ENCODE measurements at regions of chr18 and their contacts with region 1.

Region 1: DNA sequence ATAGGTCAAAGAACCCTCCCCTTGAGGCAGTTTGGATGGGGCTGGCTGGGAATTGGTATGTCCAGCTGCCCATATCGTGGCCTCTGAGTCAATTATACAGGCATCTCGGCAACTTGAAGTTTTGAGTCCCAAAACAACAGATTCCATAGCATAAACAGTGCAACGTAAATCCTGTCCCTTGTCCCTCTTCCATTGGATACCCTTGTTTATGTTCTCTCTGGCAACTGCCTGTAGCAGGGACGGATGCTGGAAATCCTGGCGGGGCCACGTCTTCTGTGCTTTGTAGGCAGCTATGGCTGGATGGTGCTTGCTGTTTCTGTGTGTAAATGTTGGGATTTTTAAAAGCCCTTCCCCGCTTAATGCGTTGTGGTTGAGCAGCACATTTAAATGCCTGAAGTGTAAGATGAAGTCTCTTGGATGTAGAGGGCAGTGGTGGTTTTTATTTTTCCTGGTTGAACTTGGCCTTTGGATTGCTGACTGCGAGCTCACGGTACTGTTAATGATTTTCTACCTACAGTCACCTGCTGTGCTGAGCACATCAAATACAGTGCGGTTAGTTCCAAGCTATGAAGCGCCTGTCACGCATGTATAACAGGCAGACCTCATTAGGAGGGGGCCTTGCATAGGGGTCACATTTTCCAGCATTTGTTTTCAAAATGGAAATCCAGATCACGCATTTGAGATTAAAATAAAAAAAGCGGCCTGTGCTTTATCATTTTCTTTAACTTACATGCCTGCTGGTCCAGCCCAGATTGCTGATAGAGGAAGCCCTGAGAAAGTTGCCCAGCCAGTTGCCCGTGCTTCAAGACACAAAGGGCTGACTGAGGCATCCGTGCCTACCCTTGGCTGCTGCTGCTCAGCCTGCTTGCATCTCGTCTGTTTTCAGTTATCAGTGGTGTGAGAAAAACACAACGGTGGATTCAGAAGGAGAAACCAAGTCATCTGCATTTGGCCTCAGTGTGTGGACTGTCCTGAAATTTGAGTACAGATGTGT is 84.7 kb downstream of the NEDD4L start:
- DNase-seq: peak in 3 of 6 donors; percentile 30 to 53 (median 47)
- ATAC-seq: peak; percentile 88 to 98 (median 96)
- H3K4me3 ChIP-seq: no peak overlapping the region
- H3K27ac ChIP-seq: peak overlapping the region in 2 of 4 donors; percentile 53 to 64
- H3K4me1 ChIP-seq: peaks cover 13 to 17% (median 15%) of the 10 kb centered on the region in 3 donors
- H3K27me3 ChIP-seq: no peaks in the 10 kb centered on the region
- CTCF ChIP-seq: no peak

Region 2: GRCh38 chr18:57881818-57882413 is 246.8 kb before region 1 on chr18:
- intact Hi-C with region 1: loop called in 1 of 3 experiments (anchors 10 kb)
- DNase-seq: peak; percentile 47 to 74 (median 60)
- ATAC-seq: peak; percentile 96 to 100 (median 99)
- H3K4me3 ChIP-seq: no peak overlapping the region
- H3K27ac ChIP-seq: no peak overlapping the region
- H3K4me1 ChIP-seq: no peaks in the 10 kb centered on the region
- H3K27me3 ChIP-seq: no peaks in the 10 kb centered on the region
- CTCF ChIP-seq: peak; percentile 83 to 87 (median 84)

Region 3: GRCh38 chr18:57970356-57971080 is 158.2 kb before region 1 on chr18:
- intact Hi-C with region 1: loop called in 1 of 3 experiments (anchors 10 kb)
- DNase-seq: no peak
- ATAC-seq: peak in 1 of 4 donors; percentile 39
- H3K4me3 ChIP-seq: no peak overlapping the region
- H3K27ac ChIP-seq: no peak overlapping the region
- H3K4me1 ChIP-seq: no peaks in the 10 kb centered on the region
- H3K27me3 ChIP-seq: no peaks in the 10 kb centered on the region
- CTCF ChIP-seq: peak in 1 of 4 donors; percentile 18

Region 4: DNA sequence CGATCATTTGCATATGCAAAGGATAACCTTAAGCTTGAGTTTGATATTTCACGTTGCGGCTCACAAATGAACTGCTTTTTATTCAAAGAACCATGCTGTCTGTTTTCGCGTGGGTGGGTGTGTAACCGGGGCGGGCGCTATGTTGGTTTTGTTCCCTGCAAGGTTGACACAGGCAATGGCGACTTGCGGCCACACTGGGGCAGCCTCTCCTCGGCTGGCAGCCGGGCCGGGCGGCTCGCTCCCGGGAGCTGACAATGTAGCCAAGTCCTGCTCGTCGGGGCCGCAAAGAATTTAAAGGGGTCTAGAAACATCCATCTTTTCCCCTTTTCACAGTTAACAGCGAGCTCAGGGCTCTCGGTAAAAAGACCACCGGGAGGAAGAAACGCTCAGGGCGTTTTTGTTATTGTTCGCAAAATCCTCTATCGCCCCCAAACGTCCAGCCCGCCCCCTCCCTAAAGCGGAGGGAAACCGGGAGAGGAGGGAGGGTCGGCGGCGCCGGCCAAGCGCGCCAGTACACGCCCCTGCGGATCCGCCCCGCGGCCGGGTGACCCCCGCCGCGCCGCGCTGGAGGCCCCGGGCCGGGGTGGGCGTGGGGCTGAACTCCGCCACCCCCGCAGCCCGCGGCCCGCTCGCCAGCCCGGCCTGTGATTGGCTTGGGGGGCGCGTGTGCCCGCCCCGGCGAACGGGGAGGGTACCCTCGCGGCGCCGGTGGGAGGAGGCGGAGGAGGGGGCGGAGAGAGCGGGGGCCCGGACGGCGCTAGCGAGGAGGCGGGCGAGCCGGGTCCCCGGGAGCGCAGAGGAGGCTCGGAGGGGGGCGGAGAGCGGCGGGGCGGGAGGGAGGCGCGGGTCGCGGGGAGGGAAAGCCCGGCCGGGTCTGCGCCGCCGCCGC is 84.9 kb before region 1 on chr18 and contains the start of gene NEDD4L:
- intact Hi-C with region 1: loop called in 2 of 3 experiments (anchors 5 to 10 kb)
- DNase-seq: peak; percentile 83 to 94 (median 89)
- ATAC-seq: peak; percentile 69 to 85 (median 77)
- H3K4me3 ChIP-seq: peak within 1 kb of the TSS; percentile 79 to 99 (median 95)
- H3K27ac ChIP-seq: peak within 1 kb of the TSS; percentile 89 to 95 (median 94)
- H3K4me1 ChIP-seq: peaks cover 13 to 16% (median 13%) of the 10 kb centered on the region in 3 donors
- H3K27me3 ChIP-seq: no peaks in the 10 kb centered on the region
- CTCF ChIP-seq: peak; percentile 70 to 85 (median 81)
- total RNA-seq, gene NEDD4L: 57.7 to 113 (median 72.3) TPM

Region 5: GRCh38 chr18:58321986-58322385 is 193.3 kb after region 1 on chr18:
- intact Hi-C with region 1: loop called in 1 of 3 experiments (anchors 10 kb)
- DNase-seq: peak; percentile 54 to 74 (median 62)
- ATAC-seq: peak; percentile 86 to 97 (median 96)
- H3K4me3 ChIP-seq: no peak overlapping the region
- H3K27ac ChIP-seq: peak overlapping the region in 3 of 4 donors; percentile 13 to 63 (median 52)
- H3K4me1 ChIP-seq: peaks cover 6 to 12% (median 7%) of the 10 kb centered on the region in 3 donors
- H3K27me3 ChIP-seq: no peaks in the 10 kb centered on the region
- CTCF ChIP-seq: peak in 3 of 4 donors; percentile 23 to 39 (median 30)

Measured in pancreas (tissue), 10 donors.